HCT116 (cell line): ENCODE measurements at regions of chr22 and their contacts with region 1.

Region 1: GRCh38 chr22:30386960-30387827 is at the start of gene RNF215:
- DNase-seq: peak; percentile 44
- ATAC-seq: peak; percentile 88
- H3K4me3 ChIP-seq: peak within 1 kb of the TSS; percentile 60 to 68
- H3K27ac ChIP-seq: peak within 1 kb of the TSS; percentile 69
- H3K4me1 ChIP-seq: peaks cover 3 to 31% of the 10 kb centered on the region in 2 experiments; a peak in 3 of 4 replicates
- H3K27me3 ChIP-seq: no peaks in the 10 kb centered on the region
- CTCF ChIP-seq: peak; percentile 77 to 78 (median 78)
- POLR2A ChIP-seq: no peak
- RAD21 ChIP-seq: peak; percentile 88
- total RNA-seq, gene RNF215: 20.2 TPM

Region 2: DNA sequence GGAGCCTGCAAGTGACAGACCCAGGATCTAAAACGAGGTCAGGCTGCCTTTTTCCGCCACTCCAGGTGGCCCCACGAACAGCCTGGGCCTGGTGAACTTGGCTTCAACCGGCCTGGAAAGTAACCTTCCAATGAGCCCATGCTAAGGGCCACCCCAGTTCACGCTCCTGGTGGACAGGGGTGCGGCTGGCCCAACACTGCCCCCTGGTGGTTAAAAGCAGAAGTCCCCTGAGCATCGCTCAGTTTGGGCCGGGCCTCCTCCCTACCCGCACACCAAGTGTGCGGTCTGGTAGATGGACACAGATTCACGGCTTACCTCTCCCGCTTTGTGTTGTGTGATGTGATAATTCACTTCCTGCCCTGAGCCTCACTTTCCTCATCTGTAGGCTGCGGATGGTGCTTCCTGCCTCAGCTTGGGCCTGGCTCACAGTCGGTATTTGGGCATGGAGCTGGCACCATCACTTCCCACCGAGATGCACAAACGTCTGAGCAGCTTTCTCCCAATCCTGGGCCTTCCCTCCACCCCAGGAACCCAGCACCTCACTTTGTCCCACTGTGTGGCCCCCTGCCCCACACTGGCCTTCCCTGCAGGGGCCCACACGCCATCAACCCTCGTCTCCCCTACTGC is 98.3 kb after region 1 on chr22:
- CTCF ChIA-PET with region 1: interaction called, 5 read pairs
- POLR2A ChIA-PET with region 1: no interaction called
- RAD21 ChIA-PET with region 1: no interaction called
- intact Hi-C with region 1: loop called (anchors 1 kb)
- DNase-seq: peak; percentile 28
- ATAC-seq: peak; percentile 99
- H3K4me3 ChIP-seq: no peak overlapping the region
- H3K27ac ChIP-seq: no peak overlapping the region; the same call in 1 of the 2 replicates
- H3K4me1 ChIP-seq: peaks cover 0 to 7% of the 10 kb centered on the region in 2 experiments; a peak in 2 of 4 replicates
- H3K27me3 ChIP-seq: no peaks in the 10 kb centered on the region
- CTCF ChIP-seq: peak; percentile 77 to 95 (median 85)
- POLR2A ChIP-seq: no peak
- RAD21 ChIP-seq: peak; percentile 85

Region 3: GRCh38 chr22:30606455-30607299 is 219.5 kb after region 1 on chr22 and contains the start of gene TCN2:
- CTCF ChIA-PET with region 1: no interaction called
- POLR2A ChIA-PET with region 1: no interaction called
- RAD21 ChIA-PET with region 1: no interaction called
- intact Hi-C with region 1: loop called (anchors 2 kb)
- DNase-seq: no peak
- ATAC-seq: peak; percentile 59
- H3K4me3 ChIP-seq: peak within 1 kb of the TSS; percentile 51 to 68
- H3K27ac ChIP-seq: peak within 1 kb of the TSS; percentile 13; the same call in 1 of the 2 replicates
- H3K4me1 ChIP-seq: peaks cover 22 to 49% of the 10 kb centered on the region in 2 experiments
- H3K27me3 ChIP-seq: no peaks in the 10 kb centered on the region
- CTCF ChIP-seq: 0 out of 6 replicates have a peak, but pooled peaks of 1 of the 3 experiments have one; percentile 1
- POLR2A ChIP-seq: no peak
- RAD21 ChIP-seq: no peak
- total RNA-seq, gene TCN2: 2.2 TPM

Region 4: GRCh38 chr22:30628491-30628890 is 241.3 kb after region 1 on chr22:
- CTCF ChIA-PET with region 1: no interaction called
- POLR2A ChIA-PET with region 1: no interaction called
- RAD21 ChIA-PET with region 1: no interaction called
- intact Hi-C with region 1: no loop called
- DNase-seq: no peak
- ATAC-seq: no peak
- H3K4me3 ChIP-seq: no peak overlapping the region
- H3K27ac ChIP-seq: no peak overlapping the region
- H3K4me1 ChIP-seq: no peaks in the 10 kb centered on the region
- H3K27me3 ChIP-seq: no peaks in the 10 kb centered on the region
- CTCF ChIP-seq: no peak
- POLR2A ChIP-seq: no peak
- RAD21 ChIP-seq: no peak